ENCODE measurements at regions of chr5 and their contacts with region 1.

Region 1: DNA sequence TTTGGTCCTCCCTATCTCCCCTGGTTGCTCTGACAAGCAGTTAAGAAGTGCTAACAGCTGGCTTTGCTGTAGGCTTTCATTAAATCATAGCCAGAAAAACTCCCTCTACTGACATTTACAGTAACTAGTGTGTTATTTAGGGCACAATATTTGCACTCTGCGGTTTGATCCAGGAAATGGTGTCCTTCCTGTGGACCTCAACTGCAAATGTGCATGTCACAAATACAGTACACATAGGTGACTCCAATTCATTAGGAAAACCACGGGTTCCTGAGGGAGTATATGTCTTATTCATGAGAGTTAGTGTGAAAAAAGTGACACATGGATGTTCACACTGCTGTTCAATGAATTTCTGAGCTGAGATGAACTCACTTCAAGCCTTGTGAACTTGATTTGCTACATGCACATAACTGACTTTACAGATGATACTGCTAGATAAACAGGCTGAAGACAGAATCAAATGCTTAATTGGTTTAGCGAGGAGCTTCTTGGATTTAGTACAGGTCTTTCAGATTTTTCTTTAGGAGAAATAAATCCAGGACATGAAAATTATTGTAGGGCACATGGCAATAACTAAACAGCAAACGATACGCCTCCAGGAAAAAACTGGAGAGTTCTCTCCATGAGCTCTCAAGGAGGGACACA is 281.5 kb downstream of the EFNA5 start:
- DNase-seq: peak; percentile 88
- H3K4me3 ChIP-seq: no peak overlapping the region
- H3K27ac ChIP-seq: no peak overlapping the region
- H3K4me1 ChIP-seq: peaks cover 31% of the 10 kb centered on the region
- H3K27me3 ChIP-seq: no peaks in the 10 kb centered on the region
- CTCF ChIP-seq: no peak; the same call in 1 of the 2 replicates

Region 2: GRCh38 chr5:107474716-107475489 is 85.7 kb after region 1 on chr5:
- CTCF ChIA-PET with region 1: no interaction called
- POLR2A ChIA-PET with region 1: no interaction called
- intact Hi-C with region 1: loop called (anchors 5 kb)
- DNase-seq: peak; percentile 11
- H3K4me3 ChIP-seq: no peak overlapping the region
- H3K27ac ChIP-seq: no peak overlapping the region
- H3K4me1 ChIP-seq: peaks cover 40% of the 10 kb centered on the region
- H3K27me3 ChIP-seq: no peaks in the 10 kb centered on the region
- CTCF ChIP-seq: no peak